T-cell (primary cell): ENCODE measurements at regions of chr5 and their contacts with region 1.

Region 1: GRCh38 chr5:160008877-160009590 is at the start of gene TTC1:
- DNase-seq: peak; percentile 80 to 100 (median 92)
- ATAC-seq: peak; percentile 97 to 99 (median 99)
- H3K4me3 ChIP-seq: peak within 1 kb of the TSS; percentile 73 to 99
- H3K4me3 Mint-ChIP-seq: peak within 1 kb of the TSS; percentile 96 to 100 (median 98)
- H3K27ac ChIP-seq: peak within 1 kb of the TSS; percentile 91
- H3K27ac Mint-ChIP-seq: peak within 1 kb of the TSS; percentile 91 to 98
- H3K4me1 ChIP-seq: peaks cover 2 to 16% of the 10 kb centered on the region in 2 experiments
- H3K4me1 Mint-ChIP-seq: peaks cover 29 to 34% (median 33%) of the 10 kb centered on the region in 3 donors
- H3K27me3 ChIP-seq: peaks cover 0 to 3% of the 10 kb centered on the region in 2 experiments
- H3K27me3 Mint-ChIP-seq: no peaks in the 10 kb centered on the region
- total RNA-seq, gene TTC1: 25.4 to 43.6 (median 37.3) TPM

Region 2: GRCh38 chr5:159838551-159839222 is 170.3 kb before region 1 on chr5:
- CTCF ChIA-PET with region 1: no interaction called
- POLR2A ChIA-PET with region 1: no interaction called
- DNase-seq: no peak
- ATAC-seq: no peak
- H3K4me3 ChIP-seq: no peak overlapping the region
- H3K4me3 Mint-ChIP-seq: no peak overlapping the region
- H3K27ac ChIP-seq: no peak overlapping the region
- H3K27ac Mint-ChIP-seq: no peak overlapping the region
- H3K4me1 ChIP-seq: no peaks in the 10 kb centered on the region
- H3K4me1 Mint-ChIP-seq: no peaks in the 10 kb centered on the region
- H3K27me3 ChIP-seq: no peaks in the 10 kb centered on the region
- H3K27me3 Mint-ChIP-seq: peaks cover 12 to 14% of the 10 kb centered on the region in 2 donors

Region 3: DNA sequence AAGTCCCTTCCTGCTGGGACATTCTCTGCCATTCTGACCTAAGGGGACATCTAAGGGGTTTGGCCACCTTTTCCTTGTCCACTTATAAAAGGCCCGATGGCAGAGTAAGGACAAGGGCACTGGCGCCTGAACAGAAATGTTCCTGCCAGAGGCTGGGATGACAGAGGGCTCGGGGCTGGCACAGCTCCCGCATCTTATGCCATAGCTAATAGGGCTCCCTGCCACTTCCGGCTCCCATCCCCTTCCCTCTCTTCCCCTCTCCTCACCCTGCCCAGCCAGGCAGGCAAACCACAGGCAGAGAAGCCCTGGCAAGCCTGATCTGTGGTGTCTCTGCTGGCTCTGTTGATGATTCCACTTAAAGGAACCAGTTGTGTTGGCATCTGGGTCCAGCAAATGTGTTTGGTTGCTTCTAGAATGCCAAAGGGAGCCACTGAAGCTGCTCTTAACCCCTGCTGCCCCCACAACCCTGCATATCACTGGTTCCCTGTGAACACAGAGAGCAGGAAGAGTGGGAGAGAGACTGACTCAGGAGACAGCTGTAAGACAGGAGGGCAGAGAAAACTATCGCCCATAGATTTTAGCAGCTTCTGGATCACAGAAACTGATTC is 111.1 kb before region 1 on chr5:
- CTCF ChIA-PET with region 1: interaction called in 1 of 2 experiments, 3 read pairs
- POLR2A ChIA-PET with region 1: interaction called in 1 of 2 experiments, 16 read pairs
- DNase-seq: no peak
- ATAC-seq: no peak
- H3K4me3 ChIP-seq: no peak overlapping the region
- H3K4me3 Mint-ChIP-seq: no peak overlapping the region
- H3K27ac ChIP-seq: no peak overlapping the region
- H3K27ac Mint-ChIP-seq: no peak overlapping the region
- H3K4me1 ChIP-seq: no peaks in the 10 kb centered on the region
- H3K4me1 Mint-ChIP-seq: no peaks in the 10 kb centered on the region
- H3K27me3 ChIP-seq: peaks cover 0 to 8% of the 10 kb centered on the region in 2 experiments
- H3K27me3 Mint-ChIP-seq: peaks cover 27 to 31% of the 10 kb centered on the region in 2 donors

Region 4: DNA sequence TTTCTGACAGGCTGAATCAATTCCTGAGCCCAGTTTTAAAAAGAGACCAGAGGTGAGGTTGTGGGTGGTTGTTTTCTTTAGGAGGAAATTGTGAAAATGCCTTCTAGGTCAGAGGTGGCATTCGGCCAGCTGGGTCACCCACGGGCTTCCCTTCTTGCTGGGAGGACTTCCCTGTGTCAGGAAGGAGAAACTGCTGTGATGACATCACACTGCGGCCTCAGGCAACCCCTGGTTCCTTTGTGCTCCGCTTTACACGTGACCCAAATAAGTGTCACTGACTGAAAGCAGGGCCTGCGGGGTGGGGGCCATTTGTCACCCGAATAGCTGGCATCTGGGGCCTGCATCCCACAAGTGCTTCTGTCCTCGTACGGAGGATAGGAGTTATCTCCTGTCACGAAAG is 260.0 kb after region 1 on chr5:
- CTCF ChIA-PET with region 1: no interaction called
- POLR2A ChIA-PET with region 1: no interaction called
- DNase-seq: peak in 14 of 35 experiments; percentile 4 to 57 (median 16)
- ATAC-seq: no peak
- H3K4me3 ChIP-seq: no peak overlapping the region
- H3K4me3 Mint-ChIP-seq: no peak overlapping the region
- H3K27ac ChIP-seq: no peak overlapping the region
- H3K27ac Mint-ChIP-seq: no peak overlapping the region
- H3K4me1 ChIP-seq: peaks cover 0 to 3% of the 10 kb centered on the region in 2 experiments
- H3K4me1 Mint-ChIP-seq: peaks cover 4 to 5% (median 4%) of the 10 kb centered on the region in 3 donors
- H3K27me3 ChIP-seq: peaks cover 0 to 18% of the 10 kb centered on the region in 2 experiments
- H3K27me3 Mint-ChIP-seq: peaks cover 0 to 4% of the 10 kb centered on the region in 2 donors